ENCODE measurements at regions of chr4 and their contacts with region 1.

Region 1: GRCh38 chr4:143606480-143606879 is 93.0 kb downstream of the SMARCA5 start:
- DNase-seq: no peak
- H3K4me3 ChIP-seq: no peak overlapping the region
- H3K27ac ChIP-seq: no peak overlapping the region
- H3K4me1 ChIP-seq: no peaks in the 10 kb centered on the region
- H3K27me3 ChIP-seq: peaks cover 0 to 1% of the 10 kb centered on the region in 2 experiments
- CTCF ChIP-seq: no peak
- POLR2A ChIP-seq: no peak

Region 2: DNA sequence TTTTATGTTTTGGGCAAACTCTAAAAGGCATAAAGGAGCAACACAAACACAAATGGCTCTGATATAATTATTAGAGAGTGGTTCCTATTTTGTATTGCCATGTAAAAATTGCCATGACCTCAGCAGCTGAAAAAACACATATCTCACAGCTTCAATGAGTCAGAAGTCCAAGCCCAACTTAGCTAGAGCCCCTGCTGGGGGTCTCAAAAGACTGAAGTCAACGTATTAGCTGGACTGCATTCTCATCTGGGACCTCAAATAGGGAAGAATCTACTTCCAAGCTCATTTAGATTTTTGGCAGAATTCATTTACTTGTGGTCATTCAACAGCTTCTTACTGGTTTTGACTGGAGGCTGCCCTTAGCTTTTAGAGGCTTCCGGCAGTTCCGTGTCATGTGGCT is 46.6 kb after region 1 on chr4:
- CTCF ChIA-PET with region 1: no interaction called
- POLR2A ChIA-PET with region 1: no interaction called
- dilution Hi-C with region 1: no loop called
- intact Hi-C with region 1: loop called (anchors 1 kb)
- DNase-seq: peak; percentile 61
- H3K4me3 ChIP-seq: no peak overlapping the region
- H3K27ac ChIP-seq: no peak overlapping the region
- H3K4me1 ChIP-seq: no peaks in the 10 kb centered on the region
- H3K27me3 ChIP-seq: no peaks in the 10 kb centered on the region
- CTCF ChIP-seq: no peak
- POLR2A ChIP-seq: no peak

Measured in endothelial cell of umbilical vein (primary cell).